Caco-2 (cell line): ENCODE measurements at regions of chr11 and their contacts with region 1.

Region 1: GRCh38 chr11:17063171-17064002 is 14.1 kb downstream of the RPS13 start:
- DNase-seq: peak; percentile 79 to 88
- H3K4me3 ChIP-seq: no peak overlapping the region
- H3K4me3 Mint-ChIP-seq: no peak overlapping the region
- H3K27ac Mint-ChIP-seq: no peak overlapping the region
- H3K4me1 ChIP-seq: no peaks in the 10 kb centered on the region
- H3K4me1 Mint-ChIP-seq: no peaks in the 10 kb centered on the region
- H3K27me3 ChIP-seq: no peaks in the 10 kb centered on the region
- H3K27me3 Mint-ChIP-seq: no peaks in the 10 kb centered on the region
- CTCF ChIP-seq: peak; percentile 90 to 93

Region 2: GRCh38 chr11:16785520-16786128 is 277.8 kb before region 1 on chr11:
- CTCF ChIA-PET with region 1: no interaction called
- POLR2A ChIA-PET with region 1: no interaction called
- intact Hi-C with region 1: loop called (anchors 1 kb)
- DNase-seq: peak; percentile 66 to 76
- H3K4me3 ChIP-seq: no peak overlapping the region
- H3K4me3 Mint-ChIP-seq: no peak overlapping the region
- H3K27ac Mint-ChIP-seq: no peak overlapping the region
- H3K4me1 ChIP-seq: peaks cover 22% of the 10 kb centered on the region
- H3K4me1 Mint-ChIP-seq: peaks cover 15% of the 10 kb centered on the region
- H3K27me3 ChIP-seq: no peaks in the 10 kb centered on the region
- H3K27me3 Mint-ChIP-seq: no peaks in the 10 kb centered on the region
- CTCF ChIP-seq: peak; percentile 89 to 92

Region 3: DNA sequence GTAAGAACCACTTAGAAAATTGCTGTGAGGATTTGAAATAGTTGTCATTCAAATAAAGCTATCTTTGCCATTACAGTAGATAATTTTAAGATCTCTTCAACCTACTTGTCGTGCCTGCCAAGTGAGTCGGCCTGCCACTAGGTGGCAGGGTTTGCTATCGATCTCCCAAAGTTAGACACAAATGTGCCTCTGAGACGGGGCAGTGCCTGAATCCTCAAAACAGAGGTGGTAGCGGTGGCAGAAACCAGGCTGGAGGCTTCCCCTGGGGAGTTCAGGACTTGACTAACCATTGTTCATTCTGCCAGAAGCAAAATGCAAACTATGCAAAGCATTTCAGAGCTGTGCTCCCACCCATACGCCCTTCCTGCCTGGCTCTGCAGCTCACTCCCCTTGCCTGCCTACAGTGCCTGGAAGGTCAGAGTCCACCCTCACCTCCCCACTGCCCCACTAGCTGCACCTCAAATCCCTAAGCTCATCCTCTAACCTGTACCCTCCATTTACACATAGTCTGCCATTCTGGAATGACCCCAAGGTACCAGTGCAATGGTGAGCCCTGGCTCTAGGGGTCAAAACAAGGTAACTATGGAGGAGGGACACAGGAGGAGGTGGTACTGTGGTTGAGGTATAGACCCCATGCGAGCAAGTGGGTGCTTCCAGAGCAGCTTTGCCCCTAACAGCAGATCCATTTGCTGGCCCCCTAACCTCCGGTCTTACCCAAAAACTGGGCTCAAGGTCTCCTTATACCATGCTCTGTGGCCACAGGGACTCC is 242.9 kb before region 1 on chr11:
- CTCF ChIA-PET with region 1: interaction called, 10 read pairs
- POLR2A ChIA-PET with region 1: no interaction called
- intact Hi-C with region 1: loop called (anchors 1 kb)
- DNase-seq: peak; percentile 79 to 88
- H3K4me3 ChIP-seq: no peak overlapping the region
- H3K4me3 Mint-ChIP-seq: peak overlapping the region; percentile 9
- H3K27ac Mint-ChIP-seq: peak overlapping the region; percentile 58
- H3K4me1 ChIP-seq: peaks cover 26% of the 10 kb centered on the region
- H3K4me1 Mint-ChIP-seq: peaks cover 26% of the 10 kb centered on the region
- H3K27me3 ChIP-seq: no peaks in the 10 kb centered on the region
- H3K27me3 Mint-ChIP-seq: no peaks in the 10 kb centered on the region
- CTCF ChIP-seq: peak; percentile 83 to 91

Region 4: DNA sequence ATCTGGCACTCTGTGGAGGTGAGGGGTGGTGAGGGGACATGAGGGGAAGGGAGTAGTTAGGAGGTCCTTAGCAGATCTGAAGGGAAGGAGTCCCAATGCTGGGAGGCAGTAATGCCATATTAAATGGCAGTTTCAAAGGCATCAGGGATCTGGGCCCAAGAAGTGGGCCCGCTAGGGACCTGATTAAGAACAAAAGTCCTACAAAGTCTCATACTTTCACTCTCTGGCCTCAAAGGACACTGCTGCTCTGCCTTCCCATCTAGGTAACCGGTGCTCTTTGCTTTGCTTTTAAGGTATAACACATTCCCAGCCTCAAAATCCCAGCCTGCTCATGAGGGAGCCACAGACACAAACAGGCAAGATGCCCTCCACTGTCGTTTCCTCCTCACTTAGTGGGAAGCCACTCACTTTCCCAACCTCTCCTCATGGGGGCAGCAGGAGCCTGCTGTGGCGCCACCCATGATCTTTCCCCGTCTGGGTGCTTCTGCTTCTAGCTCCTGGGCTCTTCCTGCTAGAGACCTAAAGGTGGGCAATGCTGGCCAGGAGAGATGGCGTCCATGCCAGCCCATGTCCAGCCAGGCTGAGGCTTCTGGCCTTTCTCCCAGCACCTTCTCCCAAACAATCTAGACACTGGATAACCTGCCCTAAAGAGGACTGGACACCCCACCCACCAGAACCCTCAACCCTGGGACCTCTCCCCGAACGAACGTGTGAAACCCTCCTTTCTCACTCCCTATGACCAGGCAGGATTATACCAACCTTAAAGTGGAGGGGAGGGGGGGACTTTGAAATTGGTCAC is 117.5 kb before region 1 on chr11:
- CTCF ChIA-PET with region 1: interaction called, 44 read pairs
- POLR2A ChIA-PET with region 1: interaction called, 4 read pairs
- intact Hi-C with region 1: loop called (anchors 1 kb)
- DNase-seq: peak; percentile 75 to 83
- H3K4me3 ChIP-seq: no peak overlapping the region
- H3K4me3 Mint-ChIP-seq: no peak overlapping the region
- H3K27ac Mint-ChIP-seq: peak overlapping the region; percentile 3
- H3K4me1 ChIP-seq: peaks cover 9% of the 10 kb centered on the region; the same call in 1 of the 2 replicates
- H3K4me1 Mint-ChIP-seq: peaks cover 16% of the 10 kb centered on the region
- H3K27me3 ChIP-seq: no peaks in the 10 kb centered on the region
- H3K27me3 Mint-ChIP-seq: no peaks in the 10 kb centered on the region
- CTCF ChIP-seq: peak; percentile 87 to 97

Region 5: GRCh38 chr11:17014838-17015626 is 48.4 kb before region 1 on chr11:
- CTCF ChIA-PET with region 1: interaction called, 9 read pairs
- POLR2A ChIA-PET with region 1: no interaction called
- intact Hi-C with region 1: loop called (anchors 1 kb)
- DNase-seq: peak; percentile 62 to 65
- H3K4me3 ChIP-seq: peak overlapping the region; percentile 56
- H3K4me3 Mint-ChIP-seq: no peak overlapping the region
- H3K27ac Mint-ChIP-seq: peak overlapping the region; percentile 66
- H3K4me1 ChIP-seq: peaks cover 23% of the 10 kb centered on the region
- H3K4me1 Mint-ChIP-seq: peaks cover 8% of the 10 kb centered on the region
- H3K27me3 ChIP-seq: no peaks in the 10 kb centered on the region
- H3K27me3 Mint-ChIP-seq: no peaks in the 10 kb centered on the region
- CTCF ChIP-seq: peak; percentile 73 to 86

Region 6: DNA sequence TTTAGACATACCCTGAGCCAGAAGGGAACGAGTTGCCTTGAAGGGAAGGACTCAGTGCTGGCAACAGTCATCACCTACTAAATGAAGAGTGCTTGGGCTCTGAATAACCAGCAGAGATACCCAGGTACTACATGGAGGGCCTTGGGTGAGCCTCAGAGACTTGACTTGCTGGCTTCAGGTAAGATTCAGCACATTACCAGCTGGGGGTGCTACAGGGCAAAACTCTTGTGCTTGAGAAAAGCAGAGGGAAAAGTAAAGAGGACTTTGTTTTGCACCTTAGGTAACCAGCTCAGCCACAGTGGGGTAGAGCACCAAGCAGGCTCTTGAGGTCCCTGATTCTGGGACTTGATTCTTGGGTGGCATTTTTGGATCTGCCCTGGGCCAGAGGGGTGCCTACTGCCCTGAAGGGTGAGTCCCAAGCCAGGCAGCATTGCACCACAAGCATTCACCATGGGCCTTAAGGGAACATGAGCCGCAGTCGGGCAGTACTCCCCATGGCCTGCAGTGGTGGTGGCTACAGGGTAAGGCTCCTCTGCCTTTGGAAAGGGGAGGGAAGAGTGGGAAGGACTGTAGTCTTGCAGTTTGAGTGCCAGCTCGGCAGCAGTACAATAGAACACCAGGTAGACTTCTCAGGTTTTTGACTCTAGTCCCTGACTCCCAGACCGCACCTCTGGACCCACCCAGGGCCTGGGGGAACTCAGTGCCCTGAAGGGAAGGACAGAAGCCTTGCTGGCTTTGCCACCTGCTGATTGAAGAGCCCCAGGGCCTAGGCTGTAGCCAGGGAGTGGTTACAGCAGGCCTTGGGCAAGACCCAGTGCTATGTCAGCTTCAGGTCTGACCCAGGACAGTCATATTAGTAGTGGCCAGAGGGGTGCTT is 26.5 kb before region 1 on chr11:
- CTCF ChIA-PET with region 1: interaction called, 21 read pairs
- POLR2A ChIA-PET with region 1: no interaction called
- intact Hi-C with region 1: loop called (anchors 1 kb)
- DNase-seq: peak; percentile 54 to 55
- H3K4me3 ChIP-seq: no peak overlapping the region
- H3K4me3 Mint-ChIP-seq: no peak overlapping the region
- H3K27ac Mint-ChIP-seq: no peak overlapping the region
- H3K4me1 ChIP-seq: no peaks in the 10 kb centered on the region
- H3K4me1 Mint-ChIP-seq: no peaks in the 10 kb centered on the region
- H3K27me3 ChIP-seq: no peaks in the 10 kb centered on the region
- H3K27me3 Mint-ChIP-seq: no peaks in the 10 kb centered on the region
- CTCF ChIP-seq: peak; percentile 10 to 33

Region 7: DNA sequence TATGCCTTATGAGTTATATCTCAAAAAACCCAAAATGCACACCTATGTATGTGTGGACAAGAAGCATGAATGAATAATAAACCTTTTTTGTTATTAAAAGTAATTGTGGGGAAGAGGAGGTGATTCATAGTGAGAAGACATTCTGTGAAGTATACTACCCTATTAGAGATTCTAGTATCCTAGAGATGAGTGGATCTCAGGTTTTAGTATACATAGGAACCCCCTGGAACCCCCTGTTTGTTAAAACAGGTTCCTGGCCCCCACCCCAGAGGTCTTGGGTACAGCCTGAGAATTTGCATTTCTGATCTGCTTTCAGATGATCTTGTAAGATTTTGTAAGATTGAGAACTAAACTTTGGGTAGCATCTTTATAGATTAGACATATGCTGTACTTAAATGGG is 230.6 kb after region 1 on chr11:
- CTCF ChIA-PET with region 1: no interaction called
- POLR2A ChIA-PET with region 1: no interaction called
- intact Hi-C with region 1: no loop called
- DNase-seq: no peak
- H3K4me3 ChIP-seq: no peak overlapping the region
- H3K4me3 Mint-ChIP-seq: no peak overlapping the region
- H3K27ac Mint-ChIP-seq: no peak overlapping the region
- H3K4me1 ChIP-seq: peaks cover 3% of the 10 kb centered on the region; the same call in 1 of the 2 replicates
- H3K4me1 Mint-ChIP-seq: no peaks in the 10 kb centered on the region
- H3K27me3 ChIP-seq: no peaks in the 10 kb centered on the region
- H3K27me3 Mint-ChIP-seq: no peaks in the 10 kb centered on the region
- CTCF ChIP-seq: no peak